OCI-LY7 (cell line): ENCODE measurements at regions of chr14 and their contacts with region 1.

Region 1: DNA sequence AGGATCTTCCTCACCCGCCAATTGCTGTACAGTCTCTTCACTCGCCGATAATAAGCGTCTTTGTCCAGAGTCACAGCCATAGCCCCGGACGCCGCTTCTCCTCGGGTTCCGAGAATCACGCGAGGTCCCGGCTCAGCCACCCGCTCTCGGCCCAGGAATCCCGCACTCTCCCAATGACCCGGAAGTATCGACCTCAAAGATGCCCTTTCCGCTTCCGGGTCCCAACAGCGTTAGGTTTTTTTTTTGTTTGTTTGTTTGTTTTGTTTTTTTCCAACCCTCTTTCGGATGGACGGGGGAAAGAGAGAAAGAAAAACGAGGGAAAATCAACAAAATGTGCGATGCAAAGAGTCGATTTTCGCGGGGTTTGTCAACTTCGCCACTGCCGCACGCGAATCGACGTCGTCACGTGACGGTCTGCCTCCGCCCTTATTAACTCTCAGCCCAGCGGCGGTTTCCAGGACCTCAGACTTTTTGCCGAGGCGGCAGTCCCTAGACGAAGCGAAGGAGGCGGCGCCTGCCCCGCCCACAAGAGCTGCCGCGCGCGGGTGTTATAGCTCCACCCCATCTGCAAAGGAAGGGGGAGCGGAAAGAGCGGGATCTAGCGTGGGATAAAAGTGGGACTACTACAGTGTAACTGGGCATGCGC is at the start of gene SUPT16H:
- DNase-seq: peak; percentile 97
- H3K4me3 ChIP-seq: peak within 1 kb of the TSS; percentile 87
- H3K27ac ChIP-seq: peak within 1 kb of the TSS; percentile 78
- H3K4me1 ChIP-seq: peaks cover 43% of the 10 kb centered on the region
- CTCF ChIP-seq: no peak; the same call in 1 of the 2 replicates
- total RNA-seq, gene SUPT16H: 100 and 106 TPM in 2 replicates

Region 2: DNA sequence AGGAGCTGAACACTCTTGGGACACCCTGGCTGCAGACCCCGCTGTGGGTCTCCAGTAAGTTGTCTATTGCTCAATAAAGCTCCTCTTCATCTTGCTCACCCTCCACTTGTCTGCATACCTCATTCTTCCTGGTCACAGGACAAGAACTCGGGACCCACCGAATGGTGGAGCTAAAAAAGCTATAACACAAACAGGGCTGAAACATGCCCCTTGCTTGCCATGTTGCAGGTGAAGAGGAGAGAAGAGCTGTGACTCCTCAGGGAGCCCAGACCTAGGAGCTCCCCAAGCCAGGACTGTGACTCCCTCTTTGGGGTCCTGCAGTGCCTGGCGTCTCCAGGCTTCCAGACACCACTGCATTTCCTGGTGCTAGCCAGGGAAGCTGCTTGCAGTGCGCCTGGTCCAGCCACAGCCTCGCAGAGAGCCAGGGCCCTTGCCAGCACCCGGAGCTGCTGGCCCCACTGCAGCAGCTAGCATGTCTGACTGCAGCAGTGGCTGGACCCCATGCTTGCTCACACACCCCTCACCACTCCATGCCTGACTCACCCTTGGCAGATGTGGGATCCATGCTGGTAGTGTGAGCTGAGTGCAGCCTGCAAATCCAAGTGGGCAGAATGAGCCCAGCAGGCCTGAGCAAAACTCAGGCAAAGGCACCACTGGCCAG is 191.0 kb before region 1 on chr14:
- CTCF ChIA-PET with region 1: no interaction called
- POLR2A ChIA-PET with region 1: no interaction called
- intact Hi-C with region 1: no loop called
- DNase-seq: no peak
- H3K4me3 ChIP-seq: no peak overlapping the region
- H3K27ac ChIP-seq: no peak overlapping the region
- H3K4me1 ChIP-seq: peaks cover 20% of the 10 kb centered on the region
- CTCF ChIP-seq: no peak

Region 3: DNA sequence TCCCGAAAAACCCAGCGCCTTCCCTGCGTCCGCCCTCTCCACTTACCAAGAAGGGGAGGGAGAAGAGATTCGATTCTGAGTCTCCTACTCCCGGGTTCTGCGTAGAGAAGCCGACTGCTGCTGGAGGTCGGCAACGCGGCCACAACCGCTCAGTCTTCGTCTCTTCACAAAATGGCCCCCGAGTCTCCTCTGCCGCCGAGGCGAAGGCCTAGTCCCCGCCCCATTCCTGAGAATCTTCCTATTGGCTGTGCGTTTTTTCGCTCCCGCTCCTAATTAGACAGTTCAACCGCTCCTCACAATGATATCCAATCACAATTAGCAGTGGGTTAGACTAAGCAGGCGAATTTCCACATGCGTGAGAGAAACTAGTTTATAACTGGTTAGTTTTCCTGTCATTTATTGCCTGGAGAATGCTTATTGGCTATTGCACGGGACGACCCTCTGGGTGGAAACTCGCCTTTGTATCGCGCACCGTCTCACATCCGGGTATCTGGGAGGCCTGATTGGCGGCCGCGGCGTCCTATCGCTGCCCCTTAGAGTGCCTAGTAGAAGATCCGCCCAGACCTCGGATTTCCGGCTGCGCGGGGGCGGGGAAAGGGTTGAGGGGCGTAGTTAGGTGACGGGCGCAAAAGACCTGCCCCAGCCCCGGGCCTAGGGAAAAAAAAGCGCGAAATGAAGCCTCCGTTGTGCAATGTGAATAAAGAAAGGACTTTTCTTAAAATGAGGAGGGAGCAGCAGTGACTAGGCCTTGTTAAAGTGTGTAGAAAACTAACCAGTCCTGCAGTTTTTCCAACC is 114.5 kb before region 1 on chr14 and contains the start of gene HNRNPC:
- CTCF ChIA-PET with region 1: no interaction called
- POLR2A ChIA-PET with region 1: interaction called, 4 read pairs
- intact Hi-C with region 1: loop called (anchors 1 kb)
- DNase-seq: peak; percentile 100
- H3K4me3 ChIP-seq: peak within 1 kb of the TSS; percentile 95
- H3K27ac ChIP-seq: peak within 1 kb of the TSS; percentile 82
- H3K4me1 ChIP-seq: peaks cover 33% of the 10 kb centered on the region
- CTCF ChIP-seq: no peak
- total RNA-seq, gene HNRNPC: 887 and 1,000 TPM in 2 replicates

Region 4: DNA sequence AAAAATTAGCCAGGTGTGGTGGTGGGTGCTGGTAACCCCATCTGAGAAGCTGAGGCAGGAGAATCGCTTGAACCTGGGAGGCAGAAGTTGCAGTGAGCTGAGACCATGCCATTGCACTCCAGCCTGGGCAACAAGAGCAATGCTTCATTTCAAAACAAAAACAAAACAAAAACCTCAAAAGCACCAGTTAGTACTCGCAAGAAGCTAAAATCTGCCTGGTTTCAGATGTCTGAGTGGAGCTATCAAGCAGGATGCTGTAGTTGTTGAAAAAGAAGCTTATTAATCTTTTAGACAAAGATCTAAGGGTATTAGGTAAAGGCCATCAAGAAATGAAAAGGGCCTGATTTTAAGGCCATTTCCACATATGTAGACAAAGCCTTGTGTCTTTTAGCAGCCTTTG is 51.0 kb before region 1 on chr14:
- CTCF ChIA-PET with region 1: no interaction called
- POLR2A ChIA-PET with region 1: no interaction called
- intact Hi-C with region 1: no loop called
- DNase-seq: no peak
- H3K4me3 ChIP-seq: no peak overlapping the region
- H3K27ac ChIP-seq: no peak overlapping the region
- H3K4me1 ChIP-seq: no peaks in the 10 kb centered on the region
- CTCF ChIP-seq: no peak

Region 5: GRCh38 chr14:21428930-21429329 is 45.0 kb after region 1 on chr14:
- CTCF ChIA-PET with region 1: no interaction called
- POLR2A ChIA-PET with region 1: interaction called, 6 read pairs
- intact Hi-C with region 1: loop called (anchors 5 kb)
- DNase-seq: no peak
- H3K4me3 ChIP-seq: no peak overlapping the region
- H3K27ac ChIP-seq: no peak overlapping the region
- H3K4me1 ChIP-seq: no peaks in the 10 kb centered on the region
- CTCF ChIP-seq: no peak

Region 6: GRCh38 chr14:21437063-21437901 is 53.3 kb after region 1 on chr14:
- CTCF ChIA-PET with region 1: interaction called, 3 read pairs
- POLR2A ChIA-PET with region 1: interaction called, 4 read pairs
- intact Hi-C with region 1: loop called (anchors 2 kb)
- DNase-seq: peak; percentile 100
- H3K4me3 ChIP-seq: peak overlapping the region; percentile 81
- H3K27ac ChIP-seq: peak overlapping the region; percentile 36
- H3K4me1 ChIP-seq: peaks cover 21% of the 10 kb centered on the region
- CTCF ChIP-seq: no peak

Region 7: GRCh38 chr14:21476925-21477681 is 93.1 kb after region 1 on chr14 and contains the starts of genes RAB2B and TOX4:
- CTCF ChIA-PET with region 1: no interaction called
- POLR2A ChIA-PET with region 1: interaction called, 3 read pairs
- intact Hi-C with region 1: loop called (anchors 1 kb)
- DNase-seq: peak; percentile 98
- H3K4me3 ChIP-seq: peak within 1 kb of the TSS; percentile 93
- H3K27ac ChIP-seq: peak within 1 kb of the TSS; percentile 58
- H3K4me1 ChIP-seq: peaks cover 16% of the 10 kb centered on the region
- CTCF ChIP-seq: peak; percentile 89
- total RNA-seq, gene RAB2B: 14.4 and 14.5 TPM in 2 replicates
- total RNA-seq, gene TOX4: 17.6 and 26.1 TPM in 2 replicates

Region 8: DNA sequence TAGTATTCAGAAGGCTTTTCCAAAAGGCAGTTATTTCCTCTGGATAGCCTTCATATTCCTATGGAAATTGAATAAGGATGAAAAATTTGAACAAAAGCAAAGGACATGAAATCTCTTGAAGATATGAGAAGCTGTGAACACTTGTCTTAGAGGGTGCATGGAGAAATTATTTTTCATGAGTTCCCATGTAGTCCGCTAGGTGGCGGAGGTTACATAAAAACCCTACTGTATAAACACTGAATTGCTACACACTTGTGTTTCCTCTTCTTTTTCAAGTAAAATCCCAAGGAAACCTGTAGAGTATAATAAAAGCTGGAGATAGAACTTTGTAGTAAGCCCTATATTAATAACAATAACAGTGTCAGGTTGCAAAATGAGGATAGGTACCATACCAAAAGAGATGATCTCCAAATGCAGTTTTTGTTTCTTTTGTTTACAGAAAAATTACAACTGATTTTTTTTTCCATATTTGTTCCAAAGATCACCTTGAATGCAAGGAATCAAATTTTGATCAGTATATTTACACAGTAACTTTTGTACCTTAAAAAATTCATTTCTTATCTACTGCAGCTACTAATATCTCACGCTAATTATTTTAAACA is 327.5 kb after region 1 on chr14:
- CTCF ChIA-PET with region 1: no interaction called
- POLR2A ChIA-PET with region 1: no interaction called
- intact Hi-C with region 1: no loop called
- DNase-seq: peak; percentile 59
- H3K4me3 ChIP-seq: no peak overlapping the region
- H3K27ac ChIP-seq: no peak overlapping the region
- H3K4me1 ChIP-seq: no peaks in the 10 kb centered on the region
- CTCF ChIP-seq: peak; percentile 94